ENCODE measurements at regions of chr19 and their contacts with region 1.

Region 1: GRCh38 chr19:7680606-7681339 is at the start of gene TRAPPC5:
- DNase-seq: peak; percentile 52
- ATAC-seq: peak; percentile 76
- H3K4me3 ChIP-seq: peak within 1 kb of the TSS; percentile 85 to 99 (median 97)
- H3K27ac ChIP-seq: peak within 1 kb of the TSS; percentile 57
- H3K4me1 ChIP-seq: peaks cover 36% of the 10 kb centered on the region
- H3K27me3 ChIP-seq: peaks cover 3 to 18% of the 10 kb centered on the region in 2 experiments; a peak in 2 of 5 replicates
- CTCF ChIP-seq: peak; percentile 90
- EP300 ChIP-seq: no peak
- POLR2A ChIP-seq: peak in 1 of 2 experiments; percentile 84; a peak in 2 of 4 replicates
- RAD21 ChIP-seq: peak; percentile 99
- total RNA-seq, gene TRAPPC5: 74.8 and 78.7 TPM in 2 replicates

Region 2: GRCh38 chr19:7562646-7563393 is 118.0 kb before region 1 on chr19:
- CTCF ChIA-PET with region 1: interaction called, 13 read pairs
- POLR2A ChIA-PET with region 1: interaction called, 4 read pairs
- in situ Hi-C with region 1: loop called (anchors 5 kb)
- intact Hi-C with region 1: no loop called
- DNase-seq: no peak
- ATAC-seq: no peak
- H3K4me3 ChIP-seq: no peak overlapping the region
- H3K27ac ChIP-seq: no peak overlapping the region
- H3K4me1 ChIP-seq: no peaks in the 10 kb centered on the region
- H3K27me3 ChIP-seq: no peaks in the 10 kb centered on the region
- CTCF ChIP-seq: no peak
- EP300 ChIP-seq: no peak
- POLR2A ChIP-seq: no peak
- RAD21 ChIP-seq: no peak

Region 3: DNA sequence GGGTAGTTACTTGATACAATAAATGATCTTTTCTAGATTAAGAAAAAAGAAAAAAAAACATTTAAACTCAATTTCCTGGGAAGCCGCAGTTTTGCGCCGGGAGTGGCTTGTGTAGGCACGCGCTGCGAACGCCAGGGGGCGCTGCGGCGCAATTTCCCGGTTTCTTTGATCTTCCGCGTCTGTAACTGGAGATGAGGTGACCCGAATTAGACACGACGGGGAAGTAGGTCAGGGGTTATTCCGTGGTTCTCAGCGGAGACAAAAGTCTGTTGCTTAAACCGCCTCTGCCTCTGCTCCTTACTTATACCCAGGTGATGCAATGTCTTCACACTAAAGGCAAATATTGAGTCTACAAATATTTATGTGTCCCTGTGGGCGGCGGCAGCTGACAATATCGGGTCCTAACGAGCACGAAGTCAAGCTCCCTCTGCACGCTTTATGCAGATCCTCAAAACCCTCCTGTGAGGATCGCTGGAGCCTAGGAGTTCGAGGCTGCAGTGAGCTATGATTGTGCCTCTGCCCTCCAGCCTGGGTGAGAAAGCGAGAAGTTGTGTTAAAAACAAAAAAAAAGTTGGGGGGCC is 28.6 kb before region 1 on chr19:
- CTCF ChIA-PET with region 1: interaction called, 34 read pairs
- POLR2A ChIA-PET with region 1: no interaction called
- in situ Hi-C with region 1: no loop called
- intact Hi-C with region 1: loop called (anchors 1 kb)
- DNase-seq: peak; percentile 96
- ATAC-seq: peak; percentile 88
- H3K4me3 ChIP-seq: peak overlapping the region in 1 of 3 experiments; percentile 31; a peak in 1 of 6 replicates
- H3K27ac ChIP-seq: peak overlapping the region; percentile 58
- H3K4me1 ChIP-seq: peaks cover 17% of the 10 kb centered on the region
- H3K27me3 ChIP-seq: no peaks in the 10 kb centered on the region
- CTCF ChIP-seq: peak; percentile 89
- EP300 ChIP-seq: peak; percentile 72 to 81; a peak in 3 of 4 replicates
- POLR2A ChIP-seq: no peak
- RAD21 ChIP-seq: peak; percentile 79

Region 4: DNA sequence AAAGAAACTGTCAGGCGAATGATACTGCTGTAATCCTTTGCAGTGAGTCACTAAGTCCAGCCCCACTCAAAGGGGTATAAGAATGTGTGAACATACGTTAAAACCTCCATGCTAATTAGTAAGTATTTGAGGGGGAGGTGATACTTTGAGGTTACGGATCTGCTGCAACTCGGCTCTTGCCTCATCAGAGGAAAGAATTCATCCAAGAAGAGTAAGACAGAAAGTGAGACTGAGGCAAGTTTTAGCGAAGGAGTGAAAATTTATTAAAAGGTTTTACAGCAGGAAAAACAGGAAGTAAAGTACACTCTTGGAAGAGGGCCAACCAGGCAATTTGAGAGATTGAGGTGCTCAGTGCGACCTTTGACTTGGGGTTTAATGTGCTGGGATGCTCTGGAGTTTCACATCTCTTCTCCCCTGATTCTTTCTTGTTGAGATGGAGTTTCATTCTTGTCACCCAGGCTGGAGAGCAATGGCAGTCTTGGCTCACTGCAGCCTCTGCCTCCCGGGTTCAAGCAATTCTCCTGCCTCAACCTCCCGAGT is 92.0 kb after region 1 on chr19:
- CTCF ChIA-PET with region 1: no interaction called
- POLR2A ChIA-PET with region 1: no interaction called
- in situ Hi-C with region 1: no loop called
- intact Hi-C with region 1: no loop called
- DNase-seq: no peak
- ATAC-seq: no peak
- H3K4me3 ChIP-seq: no peak overlapping the region
- H3K27ac ChIP-seq: no peak overlapping the region
- H3K4me1 ChIP-seq: no peaks in the 10 kb centered on the region
- H3K27me3 ChIP-seq: peaks cover 2 to 25% of the 10 kb centered on the region in 2 experiments; a peak in 3 of 5 replicates
- CTCF ChIP-seq: no peak
- EP300 ChIP-seq: no peak
- POLR2A ChIP-seq: no peak
- RAD21 ChIP-seq: no peak

Measured in HepG2 (cell line).